Psoas muscle (tissue), 8 donors: ENCODE measurements at regions of chr10 and their contacts with region 1.

Region 1: DNA sequence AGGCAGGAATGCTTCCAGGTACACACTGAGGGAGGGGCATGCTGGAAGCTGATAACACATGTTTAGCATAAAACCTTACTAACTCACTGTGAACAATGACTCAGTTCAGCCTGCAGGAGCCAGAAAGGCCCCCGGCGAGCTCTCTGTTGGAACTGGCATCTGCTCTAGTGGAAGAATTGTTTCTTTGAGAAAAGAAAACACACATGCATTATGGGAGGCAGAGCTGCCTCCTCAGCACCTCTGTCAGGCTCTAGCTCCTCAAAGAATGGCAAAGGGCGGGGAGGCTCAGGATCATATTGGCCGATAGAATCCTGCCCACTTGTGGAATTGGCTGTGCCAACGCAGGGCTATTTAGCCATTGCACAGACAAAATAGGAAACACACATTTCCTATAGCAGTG is 338.3 kb downstream of the CXCL12 start:
- DNase-seq: no peak
- ATAC-seq: no peak
- H3K4me3 ChIP-seq: no peak overlapping the region
- H3K27ac ChIP-seq: no peak overlapping the region
- H3K4me1 ChIP-seq: no peaks in the 10 kb centered on the region
- H3K27me3 ChIP-seq: peaks cover 0 to 2% (median 0%) of the 10 kb centered on the region in 3 donors
- CTCF ChIP-seq: peak; percentile 5

Region 2: GRCh38 chr10:43689955-43690771 is 356.4 kb before region 1 on chr10:
- intact Hi-C with region 1: loop called in 1 of 2 experiments (anchors 10 kb)
- DNase-seq: peak; percentile 86 to 92
- ATAC-seq: peak; percentile 97 to 99 (median 98)
- H3K4me3 ChIP-seq: peak overlapping the region; percentile 66
- H3K27ac ChIP-seq: peak overlapping the region; percentile 68
- H3K4me1 ChIP-seq: no peaks in the 10 kb centered on the region
- H3K27me3 ChIP-seq: no peaks in the 10 kb centered on the region
- CTCF ChIP-seq: peak; percentile 85